Ovary (tissue), 10 donors: ENCODE measurements at regions of chr14 and their contacts with region 1.

Region 1: GRCh38 chr14:72516936-72517700 is 376.8 kb downstream of the DPF3 start:
- DNase-seq: peak; percentile 68 to 82 (median 79)
- H3K4me3 ChIP-seq: no peak overlapping the region
- H3K27ac ChIP-seq: no peak overlapping the region
- H3K4me1 ChIP-seq: peaks cover 5% of the 10 kb centered on the region
- H3K27me3 ChIP-seq: no peaks in the 10 kb centered on the region
- CTCF ChIP-seq: peak; percentile 80 to 92 (median 84)
- EP300 ChIP-seq: no peak
- POLR2A ChIP-seq: no peak

Region 2: GRCh38 chr14:72839753-72840607 is 322.9 kb after region 1 on chr14:
- intact Hi-C with region 1: no loop called
- DNase-seq: no peak
- H3K4me3 ChIP-seq: no peak overlapping the region
- H3K27ac ChIP-seq: no peak overlapping the region
- H3K4me1 ChIP-seq: peaks cover 4% of the 10 kb centered on the region
- H3K27me3 ChIP-seq: no peaks in the 10 kb centered on the region
- CTCF ChIP-seq: no peak
- EP300 ChIP-seq: no peak
- POLR2A ChIP-seq: no peak

Region 3: GRCh38 chr14:72904840-72905561 is 387.9 kb after region 1 on chr14:
- intact Hi-C with region 1: loop called (anchors 2 kb)
- DNase-seq: peak; percentile 66 to 82 (median 68)
- H3K4me3 ChIP-seq: no peak overlapping the region
- H3K27ac ChIP-seq: no peak overlapping the region
- H3K4me1 ChIP-seq: peaks cover 11% of the 10 kb centered on the region
- H3K27me3 ChIP-seq: no peaks in the 10 kb centered on the region
- CTCF ChIP-seq: peak; percentile 60 to 96 (median 95)
- EP300 ChIP-seq: no peak
- POLR2A ChIP-seq: peak; percentile 23

Region 4: DNA sequence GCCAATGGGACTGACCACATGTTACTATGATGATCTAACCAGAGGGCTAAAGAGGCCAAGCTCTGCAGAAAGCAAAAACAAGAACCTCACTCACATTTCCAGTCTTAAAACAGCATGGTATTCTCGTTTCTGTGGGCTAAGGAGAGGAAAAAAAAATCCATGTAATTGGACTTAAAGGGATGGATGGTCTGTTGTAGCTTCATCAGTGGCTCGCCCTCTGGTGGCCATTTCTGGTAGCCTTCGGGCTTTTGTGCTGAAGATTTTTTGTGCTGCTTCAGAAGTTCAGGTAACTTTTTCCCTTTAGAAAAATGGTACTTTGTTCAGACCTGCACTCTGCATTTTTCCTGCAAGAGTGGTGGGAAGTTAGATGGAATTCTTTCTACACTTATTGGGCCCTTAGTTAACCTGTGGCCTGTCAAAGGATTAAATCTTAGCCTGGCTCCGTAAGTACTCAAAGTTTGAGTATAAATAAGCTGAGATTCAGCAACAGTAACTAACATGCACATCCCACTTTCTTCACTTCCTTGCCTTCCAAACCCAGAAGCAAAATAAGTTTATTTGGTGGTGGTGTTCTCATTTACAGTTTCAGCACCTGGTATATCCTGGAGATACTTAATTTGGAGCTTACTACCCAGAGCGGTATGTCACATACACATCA is 431.5 kb after region 1 on chr14:
- intact Hi-C with region 1: loop called (anchors 2 to 5 kb)
- DNase-seq: peak; percentile 67 to 84 (median 79)
- H3K4me3 ChIP-seq: no peak overlapping the region
- H3K27ac ChIP-seq: no peak overlapping the region
- H3K4me1 ChIP-seq: no peaks in the 10 kb centered on the region
- H3K27me3 ChIP-seq: no peaks in the 10 kb centered on the region
- CTCF ChIP-seq: peak; percentile 64 to 87 (median 82)
- EP300 ChIP-seq: no peak
- POLR2A ChIP-seq: no peak

Region 5: GRCh38 chr14:73472185-73473114 is 955.3 kb after region 1 on chr14:
- intact Hi-C with region 1: loop called in 2 of 4 experiments (anchors 10 kb)
- DNase-seq: no peak
- H3K4me3 ChIP-seq: no peak overlapping the region
- H3K27ac ChIP-seq: no peak overlapping the region
- H3K4me1 ChIP-seq: no peaks in the 10 kb centered on the region
- H3K27me3 ChIP-seq: no peaks in the 10 kb centered on the region
- CTCF ChIP-seq: peak; percentile 43 to 72 (median 66)
- EP300 ChIP-seq: no peak
- POLR2A ChIP-seq: no peak